Heart right ventricle (tissue), 16 donors: ENCODE measurements at regions of chr5 and their contacts with region 1.

Region 1: DNA sequence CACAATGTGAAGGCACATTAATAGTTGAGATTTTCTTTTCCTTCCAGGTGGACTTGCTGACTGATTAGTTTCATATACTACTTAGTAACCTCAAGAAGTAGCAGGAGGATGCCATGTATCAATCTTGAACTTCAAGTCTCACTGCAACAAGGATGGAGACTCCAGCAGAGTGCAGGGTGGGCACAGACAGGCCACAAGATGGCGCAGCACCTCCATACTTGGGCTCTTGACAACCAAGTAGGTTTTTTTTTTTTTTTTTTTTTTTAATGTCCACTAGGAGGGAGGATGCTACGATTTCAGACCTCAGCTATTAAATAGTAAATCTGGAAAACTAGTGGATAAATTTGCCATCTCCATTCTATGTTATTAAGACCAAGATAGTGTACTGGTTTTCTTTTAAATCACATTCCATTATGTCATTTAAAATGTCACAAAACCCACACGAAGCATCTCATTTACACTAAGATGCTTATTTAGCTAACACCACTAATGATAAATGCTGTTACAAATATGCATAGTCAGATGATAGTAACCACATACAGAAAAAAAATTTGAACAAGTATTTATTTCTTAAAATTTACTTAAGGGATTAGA is 58.6 kb downstream of the IL6ST start:
- DNase-seq: peak; percentile 81 to 83
- ATAC-seq: peak; percentile 59 to 90 (median 84)
- H3K4me3 ChIP-seq: no peak overlapping the region
- H3K27ac ChIP-seq: no peak overlapping the region
- H3K4me1 ChIP-seq: no peaks in the 10 kb centered on the region
- H3K27me3 ChIP-seq: no peaks in the 10 kb centered on the region
- CTCF ChIP-seq: peak; percentile 73 to 97 (median 89)

Region 2: GRCh38 chr5:55286411-55286933 is 649.7 kb before region 1 on chr5:
- intact Hi-C with region 1: loop called in 1 of 10 experiments (anchors 10 kb)
- DNase-seq: no peak
- ATAC-seq: no peak
- H3K4me3 ChIP-seq: no peak overlapping the region
- H3K27ac ChIP-seq: no peak overlapping the region
- H3K4me1 ChIP-seq: no peaks in the 10 kb centered on the region
- H3K27me3 ChIP-seq: no peaks in the 10 kb centered on the region
- CTCF ChIP-seq: no peak

Region 3: GRCh38 chr5:55973296-55973695 is 37.1 kb after region 1 on chr5:
- intact Hi-C with region 1: no loop called
- DNase-seq: no peak
- ATAC-seq: no peak
- H3K4me3 ChIP-seq: no peak overlapping the region
- H3K27ac ChIP-seq: no peak overlapping the region
- H3K4me1 ChIP-seq: peaks cover 0 to 49% (median 42%) of the 10 kb centered on the region in 9 donors
- H3K27me3 ChIP-seq: no peaks in the 10 kb centered on the region
- CTCF ChIP-seq: no peak

Region 4: GRCh38 chr5:56064984-56065383 is 128.8 kb after region 1 on chr5:
- intact Hi-C with region 1: no loop called
- DNase-seq: no peak
- ATAC-seq: no peak
- H3K4me3 ChIP-seq: no peak overlapping the region
- H3K27ac ChIP-seq: no peak overlapping the region
- H3K4me1 ChIP-seq: peaks cover 0 to 12% (median 10%) of the 10 kb centered on the region in 9 donors
- H3K27me3 ChIP-seq: no peaks in the 10 kb centered on the region
- CTCF ChIP-seq: no peak